Activated B cell treated with CpG ODN at 0.5 μM for 24 hours (primary cell): ENCODE measurements at regions of chr17 and their contacts with region 1.

Region 1: DNA sequence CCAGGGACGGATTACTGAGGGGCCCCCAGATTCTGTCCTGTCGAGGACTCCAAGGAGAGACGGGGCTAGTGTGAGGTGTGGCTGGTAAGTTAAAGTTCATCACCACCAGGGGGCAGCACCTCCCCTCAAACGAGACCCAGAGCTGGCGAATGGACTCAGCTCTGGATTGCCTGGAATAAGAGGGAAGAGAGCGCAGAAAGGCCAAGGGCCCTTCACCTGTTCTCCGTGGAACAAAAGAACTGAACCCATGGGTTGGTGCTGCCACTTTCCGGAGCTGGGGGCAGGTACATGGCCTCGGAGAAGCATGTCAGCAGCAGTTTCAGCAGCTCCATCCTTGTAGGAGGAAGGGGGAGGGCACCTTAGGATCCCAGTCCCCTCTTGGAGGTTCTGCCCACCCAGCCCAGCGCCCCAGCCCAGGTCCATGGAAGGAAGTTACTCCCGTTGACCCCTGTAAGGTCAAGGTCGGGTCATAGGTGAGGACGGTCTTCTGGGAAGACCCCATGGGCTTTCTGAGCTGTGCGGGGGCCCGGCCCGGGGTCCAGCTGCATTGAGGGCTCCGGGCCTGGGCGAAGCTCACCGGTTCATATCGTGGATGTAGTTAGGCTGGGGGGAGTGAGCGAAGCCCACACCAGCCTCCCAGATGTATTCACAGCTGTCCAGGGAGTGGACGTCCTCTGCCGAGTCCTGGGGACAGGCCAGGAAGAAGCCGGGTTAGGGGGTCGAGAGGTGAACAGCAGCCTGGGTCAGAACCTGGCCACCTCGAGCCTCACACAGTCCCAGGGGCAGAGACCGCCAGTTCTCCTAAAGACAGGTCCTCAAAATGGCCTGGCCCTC is 10.7 kb downstream of the HID1 start:
- DNase-seq: peak; percentile 71
- ATAC-seq: peak; percentile 69
- H3K4me3 Mint-ChIP-seq: no peak overlapping the region
- H3K27ac Mint-ChIP-seq: no peak overlapping the region
- H3K4me1 Mint-ChIP-seq: peaks cover 9% of the 10 kb centered on the region
- H3K27me3 Mint-ChIP-seq: peaks cover 4% of the 10 kb centered on the region
- CTCF ChIP-seq: peak; percentile 58

Region 2: GRCh38 chr17:74790161-74791054 is 171.5 kb before region 1 on chr17:
- CTCF ChIA-PET with region 1: interaction called, 10 read pairs
- POLR2A ChIA-PET with region 1: no interaction called
- intact Hi-C with region 1: no loop called
- DNase-seq: no peak
- ATAC-seq: no peak
- H3K4me3 Mint-ChIP-seq: no peak overlapping the region
- H3K27ac Mint-ChIP-seq: no peak overlapping the region
- H3K4me1 Mint-ChIP-seq: peaks cover 24% of the 10 kb centered on the region
- H3K27me3 Mint-ChIP-seq: no peaks in the 10 kb centered on the region
- CTCF ChIP-seq: no peak

Region 3: DNA sequence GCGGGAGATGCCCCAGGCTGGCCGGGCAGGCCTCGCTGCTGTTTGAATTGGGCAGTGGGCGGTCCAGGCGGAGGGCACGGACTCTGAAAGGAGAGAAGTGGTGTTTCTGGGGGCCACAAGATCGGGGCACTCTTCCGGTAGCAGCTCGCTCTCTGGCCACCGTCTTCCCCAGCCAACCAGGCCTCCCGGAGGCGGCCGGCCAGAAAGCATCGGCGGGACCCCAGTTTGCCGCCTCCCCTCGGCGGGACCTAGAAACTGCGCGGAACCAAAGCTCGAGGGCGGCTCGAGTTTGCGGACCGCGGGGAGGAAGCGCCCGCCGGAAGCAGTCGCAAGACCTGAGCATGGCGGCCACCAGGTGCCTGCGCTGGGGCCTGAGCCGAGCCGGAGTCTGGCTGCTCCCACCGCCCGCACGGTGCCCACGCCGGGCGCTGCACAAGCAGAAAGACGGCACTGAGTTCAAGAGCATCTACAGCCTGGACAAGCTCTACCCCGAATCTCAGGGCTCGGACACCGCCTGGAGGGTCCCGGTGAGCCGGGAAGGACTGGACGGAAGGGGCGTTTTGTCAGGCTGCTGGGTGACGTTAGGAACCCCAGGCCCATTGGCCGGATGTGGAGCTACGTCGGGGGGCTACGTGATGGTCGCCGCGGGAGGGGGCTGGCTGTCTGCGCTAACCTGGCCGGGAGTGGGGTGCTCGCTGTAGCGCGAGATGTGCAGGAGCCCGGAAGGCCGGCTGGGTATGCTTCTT is 50.6 kb after region 1 on chr17 and contains the start of gene MRPL58:
- CTCF ChIA-PET with region 1: interaction called, 33 read pairs
- POLR2A ChIA-PET with region 1: interaction called, 15 read pairs
- intact Hi-C with region 1: loop called (anchors 1 kb)
- DNase-seq: peak; percentile 78
- ATAC-seq: peak; percentile 95
- H3K4me3 Mint-ChIP-seq: peak within 1 kb of the TSS; percentile 97
- H3K27ac Mint-ChIP-seq: peak within 1 kb of the TSS; percentile 89
- H3K4me1 Mint-ChIP-seq: peaks cover 29% of the 10 kb centered on the region
- H3K27me3 Mint-ChIP-seq: no peaks in the 10 kb centered on the region
- CTCF ChIP-seq: no peak
- total RNA-seq, gene MRPL58: 28.4 and 31.8 TPM in 2 replicates

Region 4: DNA sequence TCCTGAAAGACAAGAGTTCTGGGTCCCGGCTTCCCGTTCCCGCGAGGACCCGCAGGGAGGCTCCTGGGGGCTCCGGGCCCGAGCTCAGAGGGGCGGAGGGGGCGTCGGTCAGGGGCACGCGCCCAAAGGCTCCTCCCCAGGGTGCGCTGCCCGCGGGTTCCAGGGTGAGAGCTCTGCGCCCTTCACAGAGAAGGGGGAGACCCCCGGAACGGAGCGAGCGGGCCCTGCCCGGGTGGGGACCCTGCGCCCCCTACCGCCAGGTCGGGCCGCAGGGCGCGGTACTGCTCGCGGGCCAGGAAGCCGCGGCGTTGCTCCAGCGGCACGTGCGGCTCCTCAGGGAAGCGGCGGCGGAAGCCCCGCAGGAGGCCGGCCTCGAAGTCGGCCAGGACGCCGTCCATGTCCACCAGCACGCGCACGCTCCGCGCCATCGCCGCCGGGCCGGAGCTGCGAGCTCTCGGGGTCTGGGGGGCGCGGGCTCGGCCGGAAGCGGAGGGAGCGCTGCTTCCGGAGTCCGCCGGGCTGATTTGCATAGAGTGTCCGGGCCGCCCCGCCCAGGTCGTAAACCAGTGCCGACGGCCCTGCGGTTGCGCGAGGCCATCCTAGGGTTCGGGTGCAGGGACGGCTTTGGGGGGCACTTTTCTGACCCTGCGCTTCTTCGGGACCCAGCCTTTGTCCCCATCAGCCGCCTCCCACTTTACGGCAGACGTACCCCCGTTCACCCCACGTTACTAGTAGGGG is 169.6 kb after region 1 on chr17 and contains the start of gene NT5C:
- CTCF ChIA-PET with region 1: interaction called, 9 read pairs
- POLR2A ChIA-PET with region 1: interaction called, 3 read pairs
- intact Hi-C with region 1: loop called (anchors 1 kb)
- DNase-seq: peak; percentile 83
- ATAC-seq: peak; percentile 83
- H3K4me3 Mint-ChIP-seq: peak within 1 kb of the TSS; percentile 88
- H3K27ac Mint-ChIP-seq: peak within 1 kb of the TSS; percentile 92
- H3K4me1 Mint-ChIP-seq: peaks cover 28% of the 10 kb centered on the region
- H3K27me3 Mint-ChIP-seq: no peaks in the 10 kb centered on the region
- CTCF ChIP-seq: no peak
- total RNA-seq, gene NT5C: 95.0 and 98.2 TPM in 2 replicates

Region 5: GRCh38 chr17:75205037-75205792 is 243.3 kb after region 1 on chr17 and contains the start of gene NUP85:
- CTCF ChIA-PET with region 1: interaction called, 78 read pairs
- POLR2A ChIA-PET with region 1: interaction called, 9 read pairs
- intact Hi-C with region 1: loop called (anchors 1 kb)
- DNase-seq: peak; percentile 90
- ATAC-seq: peak; percentile 91
- H3K4me3 Mint-ChIP-seq: peak within 1 kb of the TSS; percentile 96
- H3K27ac Mint-ChIP-seq: peak within 1 kb of the TSS; percentile 99
- H3K4me1 Mint-ChIP-seq: peaks cover 22% of the 10 kb centered on the region
- H3K27me3 Mint-ChIP-seq: no peaks in the 10 kb centered on the region
- CTCF ChIP-seq: no peak
- total RNA-seq, gene NUP85: 103 and 107 TPM in 2 replicates